ENCODE measurements at regions of chr18 and their contacts with region 1.

Region 1: DNA sequence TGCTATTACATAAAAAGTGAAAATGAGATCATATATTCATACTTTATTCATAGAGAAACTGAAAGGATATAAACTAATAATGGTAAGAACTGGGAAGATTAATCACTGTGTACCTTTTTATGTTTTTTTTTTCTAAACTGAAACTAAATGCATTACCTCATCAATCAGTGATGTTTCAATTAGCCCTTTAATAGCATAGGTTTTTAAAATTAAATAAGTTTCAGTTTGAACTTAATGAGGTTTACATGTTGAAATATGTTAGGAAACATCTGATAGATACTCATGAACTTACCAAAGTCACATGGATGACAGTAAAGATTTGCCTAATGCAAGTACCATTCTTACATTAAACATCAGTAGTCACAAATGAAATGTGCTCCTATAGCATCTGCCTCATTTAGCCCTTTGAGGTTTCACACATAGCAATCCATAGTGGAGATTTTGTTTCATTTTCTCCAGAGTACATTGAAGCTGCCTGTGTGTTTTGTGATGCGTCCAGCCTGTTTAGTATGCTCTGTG is 8.9 kb downstream of the MAPRE2 start:
- DNase-seq: no peak
- ATAC-seq: peak; percentile 9 to 10
- H3K4me3 ChIP-seq: peak overlapping the region; percentile 4
- H3K27ac ChIP-seq: no peak overlapping the region
- H3K4me1 ChIP-seq: peaks cover 20% of the 10 kb centered on the region
- H3K27me3 ChIP-seq: no peaks in the 10 kb centered on the region

Region 2: DNA sequence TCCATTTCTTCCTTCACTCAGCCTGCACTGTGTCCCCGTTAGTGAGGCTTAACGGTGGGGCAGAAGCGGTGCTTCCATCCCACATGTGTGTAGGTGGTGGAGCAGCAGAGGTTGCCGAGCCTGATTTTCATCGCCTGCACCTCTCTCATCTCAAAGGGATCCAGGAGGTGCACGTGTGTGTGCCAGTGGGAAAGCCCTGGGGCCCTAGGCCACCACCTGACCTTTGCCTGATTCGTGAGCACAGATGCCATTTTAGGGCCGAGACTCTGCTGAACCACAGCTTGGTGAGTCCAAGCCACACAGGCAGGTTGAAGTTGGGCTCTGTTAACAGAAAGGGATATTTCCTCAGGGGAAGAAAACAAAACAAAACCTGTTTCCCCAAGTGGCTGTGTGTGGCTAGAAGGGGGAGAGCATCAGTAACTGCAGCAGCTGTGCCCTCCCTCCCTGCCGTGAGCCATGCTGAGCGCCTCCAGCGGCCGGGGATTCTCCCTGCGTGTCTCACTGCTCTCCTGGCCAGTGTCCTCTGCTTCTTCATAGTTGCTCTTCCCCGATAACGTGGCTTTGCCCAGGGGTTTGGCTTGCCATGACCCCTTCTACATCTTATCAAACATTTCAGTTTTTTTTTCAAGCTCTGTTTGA is 72.6 kb after region 1 on chr18:
- intact Hi-C with region 1: loop called in 1 of 4 experiments (anchors 10 kb)
- DNase-seq: peak in 2 of 3 donors; percentile 49 to 67
- ATAC-seq: peak; percentile 23 to 52
- H3K4me3 ChIP-seq: no peak overlapping the region
- H3K27ac ChIP-seq: no peak overlapping the region
- H3K4me1 ChIP-seq: peaks cover 13% of the 10 kb centered on the region
- H3K27me3 ChIP-seq: no peaks in the 10 kb centered on the region